ENCODE measurements at regions of chr19 and their contacts with region 1.

Region 1: DNA sequence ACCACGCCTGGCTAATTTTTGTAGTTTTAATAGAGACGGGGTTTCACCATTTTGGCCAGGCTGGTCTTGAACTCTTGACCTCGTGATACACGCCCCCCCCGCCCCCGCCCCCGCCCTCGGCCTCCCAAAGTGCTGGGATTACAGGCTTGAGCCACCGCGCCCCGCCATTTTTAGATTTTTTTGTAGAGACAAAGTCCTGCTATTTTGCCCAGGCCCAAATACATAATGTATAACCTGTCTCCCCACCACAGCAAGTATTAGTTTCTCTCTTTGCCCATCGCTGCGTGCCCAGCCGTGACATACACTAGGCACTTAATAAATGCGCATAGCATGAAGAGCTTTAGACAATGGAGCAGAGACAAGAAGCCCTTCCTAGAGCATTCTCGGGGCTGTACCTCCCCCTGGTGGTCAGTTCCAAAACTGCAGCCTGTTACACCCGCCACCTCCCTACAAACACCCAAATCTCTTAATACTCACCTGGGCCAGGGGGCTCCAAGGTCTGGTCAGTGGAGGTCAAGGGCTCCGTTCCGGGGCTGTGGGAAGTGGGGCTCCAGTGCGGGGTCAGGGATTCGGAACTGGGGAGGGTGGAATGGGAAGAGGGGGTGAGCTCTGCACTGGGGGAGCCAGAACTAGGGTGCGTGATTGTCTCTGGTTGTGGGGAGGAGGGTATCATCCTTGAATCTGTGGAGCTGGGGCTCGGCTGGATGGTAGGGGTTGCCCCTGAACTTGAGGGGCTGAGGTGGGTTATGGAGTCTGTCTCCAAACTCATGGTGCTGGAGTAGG is 22.5 kb downstream of the IQCN start:
- H3K4me3 ChIP-seq: no peak overlapping the region
- H3K27ac ChIP-seq: no peak overlapping the region
- H3K4me1 ChIP-seq: no peaks in the 10 kb centered on the region
- CTCF ChIP-seq: peak; percentile 80

Region 2: GRCh38 chr19:18007044-18007916 is 244.5 kb before region 1 on chr19:
- CTCF ChIA-PET with region 1: interaction called, 10 read pairs
- POLR2A ChIA-PET with region 1: interaction called, 6 read pairs
- H3K4me3 ChIP-seq: peak overlapping the region; percentile 38
- H3K27ac ChIP-seq: no peak overlapping the region
- H3K4me1 ChIP-seq: no peaks in the 10 kb centered on the region; the same call in 1 of the 2 replicates
- CTCF ChIP-seq: peak; percentile 96

Region 3: GRCh38 chr19:18063463-18063862 is 188.3 kb before region 1 on chr19:
- CTCF ChIA-PET with region 1: interaction called, 36 read pairs
- POLR2A ChIA-PET with region 1: no interaction called
- H3K4me3 ChIP-seq: no peak overlapping the region
- H3K27ac ChIP-seq: no peak overlapping the region
- H3K4me1 ChIP-seq: no peaks in the 10 kb centered on the region
- CTCF ChIP-seq: peak; percentile 51; the same call in 1 of the 2 replicates

Region 4: GRCh38 chr19:18160971-18161635 is 90.7 kb before region 1 on chr19:
- CTCF ChIA-PET with region 1: interaction called, 11 read pairs
- POLR2A ChIA-PET with region 1: no interaction called
- H3K4me3 ChIP-seq: peak overlapping the region; percentile 17
- H3K27ac ChIP-seq: peak overlapping the region; percentile 28; the same call in 1 of the 2 replicates
- H3K4me1 ChIP-seq: peaks cover 12% of the 10 kb centered on the region
- CTCF ChIP-seq: no peak

Region 5: GRCh38 chr19:18203863-18204393 is 47.9 kb before region 1 on chr19 and contains the start of gene RAB3A:
- CTCF ChIA-PET with region 1: interaction called, 121 read pairs
- POLR2A ChIA-PET with region 1: interaction called, 4 read pairs
- H3K4me3 ChIP-seq: peak within 1 kb of the TSS; percentile 70
- H3K27ac ChIP-seq: peak within 1 kb of the TSS; percentile 60
- H3K4me1 ChIP-seq: peaks cover 8% of the 10 kb centered on the region
- CTCF ChIP-seq: peak; percentile 87

Region 6: DNA sequence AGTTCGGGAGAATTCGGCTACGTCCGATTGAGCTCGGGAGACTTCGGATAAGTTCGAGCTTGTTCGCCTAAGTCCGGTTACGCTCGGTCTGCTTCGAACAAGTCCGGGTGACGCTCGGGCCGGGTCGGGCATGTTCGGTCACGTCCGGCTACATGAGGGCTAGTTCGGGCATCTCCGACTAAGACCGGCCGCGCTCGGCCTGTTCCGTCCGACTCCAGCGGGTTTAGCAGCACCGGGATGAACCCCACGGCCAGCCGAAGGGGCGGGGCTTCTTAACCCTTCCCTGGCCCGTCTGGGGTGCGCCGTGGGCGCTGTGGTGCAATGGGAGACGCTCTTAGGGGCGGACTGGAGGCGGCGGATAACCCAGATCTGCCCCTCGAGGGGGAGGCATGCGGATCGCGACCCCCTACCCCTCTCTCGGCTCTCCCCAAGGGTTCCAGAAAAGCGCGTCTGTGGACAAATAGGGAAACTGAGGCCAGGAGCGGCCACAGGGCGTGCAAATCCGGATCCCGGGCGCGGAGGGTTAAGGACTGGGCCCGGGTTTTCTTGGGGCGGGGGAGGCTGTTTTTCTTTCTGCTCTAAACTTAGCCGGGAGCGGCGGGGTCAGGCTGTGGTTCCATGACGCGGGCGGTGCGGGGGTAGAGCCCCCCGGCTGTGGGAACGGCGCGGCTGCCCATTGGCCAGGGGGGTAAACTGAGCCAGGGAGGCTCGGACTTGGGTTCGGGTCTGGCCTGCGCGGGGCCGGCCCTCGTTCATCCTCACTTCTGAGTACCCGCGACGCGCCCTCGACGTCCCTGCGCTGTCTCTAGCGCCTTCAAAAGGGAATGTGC is 27.0 kb before region 1 on chr19:
- CTCF ChIA-PET with region 1: interaction called, 16 read pairs
- POLR2A ChIA-PET with region 1: interaction called, 4 read pairs
- H3K4me3 ChIP-seq: peak overlapping the region; percentile 23
- H3K27ac ChIP-seq: no peak overlapping the region
- H3K4me1 ChIP-seq: no peaks in the 10 kb centered on the region; the same call in 1 of the 2 replicates
- CTCF ChIP-seq: no peak

Region 7: DNA sequence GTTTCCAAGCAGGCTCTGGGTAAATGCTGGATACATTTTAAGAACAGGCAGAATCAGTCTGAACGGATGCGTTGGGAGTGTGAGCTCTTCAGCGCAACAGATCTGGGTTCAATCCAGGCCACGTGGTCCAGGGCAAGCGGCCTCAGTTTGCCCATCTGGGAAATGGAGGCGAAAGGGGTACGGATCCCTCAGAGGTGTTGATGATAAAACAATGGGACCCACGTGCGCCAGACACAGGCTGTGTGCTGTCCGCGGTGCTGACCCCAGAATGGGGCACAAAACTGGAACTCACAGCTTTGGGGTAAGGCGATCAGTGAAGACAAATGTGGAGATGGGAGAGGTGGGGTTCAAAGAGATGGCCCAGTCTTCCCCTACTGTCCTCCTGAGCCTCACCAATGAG is 12.5 kb before region 1 on chr19:
- CTCF ChIA-PET with region 1: interaction called, 12 read pairs
- POLR2A ChIA-PET with region 1: no interaction called
- H3K4me3 ChIP-seq: no peak overlapping the region
- H3K27ac ChIP-seq: no peak overlapping the region
- H3K4me1 ChIP-seq: no peaks in the 10 kb centered on the region
- CTCF ChIP-seq: no peak

Region 8: GRCh38 chr19:18304458-18305310 is 52.9 kb after region 1 on chr19:
- CTCF ChIA-PET with region 1: no interaction called
- POLR2A ChIA-PET with region 1: no interaction called
- H3K4me3 ChIP-seq: no peak overlapping the region
- H3K27ac ChIP-seq: no peak overlapping the region; the same call in 1 of the 2 replicates
- H3K4me1 ChIP-seq: peaks cover 5% of the 10 kb centered on the region; the same call in 1 of the 2 replicates
- CTCF ChIP-seq: peak; percentile 46; the same call in 1 of the 2 replicates